ENCODE measurements at regions of chr13 and their contacts with region 1.

Region 1: DNA sequence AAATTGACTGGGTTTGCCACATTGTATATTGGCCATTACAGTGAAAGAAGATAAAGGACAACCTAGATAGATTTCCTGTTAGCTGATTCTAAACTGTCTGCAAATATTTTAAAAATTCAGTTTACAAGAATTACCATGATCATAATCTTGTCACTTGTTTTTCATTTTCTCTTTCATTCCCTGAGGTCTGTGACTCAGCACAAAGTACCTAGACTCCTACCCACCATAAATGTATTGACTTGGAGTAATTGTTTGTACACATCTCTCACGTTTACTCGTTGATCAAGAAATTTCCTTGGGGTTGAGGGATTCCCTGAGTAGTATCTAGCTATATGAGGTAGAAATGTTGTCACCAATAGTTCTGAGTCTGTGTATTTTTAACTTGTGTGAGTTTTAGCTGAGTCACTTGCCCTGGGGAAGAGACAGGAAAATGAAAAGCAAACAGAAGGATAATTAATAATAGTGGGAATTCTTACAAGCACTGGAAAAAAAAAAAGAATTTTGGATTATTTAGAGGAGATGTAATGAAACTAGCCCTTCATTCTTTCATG is 299.2 kb upstream of the DACH1 start:
- DNase-seq: no peak

Region 2: DNA sequence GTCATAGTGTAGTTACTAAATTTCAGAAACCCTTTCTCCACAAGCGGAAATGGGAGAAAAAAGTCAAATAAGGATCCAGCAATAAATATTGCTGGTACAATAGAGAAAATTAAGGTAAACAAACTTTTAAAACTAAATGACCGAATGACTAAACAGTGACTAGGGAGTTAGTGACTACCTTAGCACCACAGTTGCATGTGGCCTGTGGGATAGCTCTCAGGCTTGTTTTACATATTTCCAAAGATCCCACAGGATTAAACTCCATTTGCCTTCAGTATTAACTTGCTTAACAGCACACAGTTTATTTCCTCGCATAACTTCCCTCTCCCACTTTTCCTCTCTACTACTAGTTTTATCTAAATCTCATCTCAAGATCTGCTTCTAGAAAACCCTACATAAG is 1233.7 kb before region 1 on chr13:
- intact Hi-C with region 1: loop called in 1 of 2 experiments (anchors 5 kb)
- DNase-seq: no peak

Region 3: DNA sequence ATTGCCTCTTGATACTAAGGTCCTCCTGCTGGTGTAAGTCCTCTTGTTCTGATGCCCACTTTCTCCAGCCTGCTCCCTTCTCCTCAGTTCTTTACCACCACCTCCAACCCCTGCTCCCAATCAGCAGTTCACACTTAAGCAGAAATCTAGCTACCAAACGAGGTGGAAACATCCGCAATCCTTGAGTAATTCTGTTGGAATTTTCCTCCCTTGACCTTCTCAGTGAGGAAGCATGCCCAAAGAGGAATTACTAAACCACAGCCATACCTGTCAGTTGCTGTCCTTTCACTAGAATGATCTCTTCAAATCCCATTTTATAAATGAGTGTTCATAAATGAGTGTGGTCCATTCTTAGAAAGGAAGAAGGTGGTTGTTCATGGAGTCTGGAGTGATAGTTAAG is 589.0 kb before region 1 on chr13:
- intact Hi-C with region 1: no loop called
- DNase-seq: no peak

Region 4: DNA sequence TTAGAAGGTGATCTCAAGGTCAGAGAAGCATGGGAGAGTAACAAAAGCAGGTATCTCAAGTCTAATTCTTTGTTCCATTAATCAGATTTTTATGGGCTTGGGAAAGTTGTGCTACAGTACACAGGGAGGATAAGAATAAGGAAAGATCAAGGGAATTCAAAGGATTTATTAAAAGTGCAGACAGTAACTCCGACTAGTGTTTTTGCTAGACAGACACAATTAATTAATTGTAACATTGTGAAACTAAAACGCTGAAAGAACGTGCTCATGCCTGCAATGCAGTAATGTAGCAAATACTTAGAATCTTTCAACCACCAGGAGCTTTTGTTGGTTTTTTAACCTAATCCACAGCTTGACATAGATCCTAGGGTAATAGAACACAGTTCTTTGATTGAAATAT is 520.7 kb before region 1 on chr13:
- intact Hi-C with region 1: loop called in 1 of 2 experiments (anchors 5 kb)
- DNase-seq: no peak

Region 5: DNA sequence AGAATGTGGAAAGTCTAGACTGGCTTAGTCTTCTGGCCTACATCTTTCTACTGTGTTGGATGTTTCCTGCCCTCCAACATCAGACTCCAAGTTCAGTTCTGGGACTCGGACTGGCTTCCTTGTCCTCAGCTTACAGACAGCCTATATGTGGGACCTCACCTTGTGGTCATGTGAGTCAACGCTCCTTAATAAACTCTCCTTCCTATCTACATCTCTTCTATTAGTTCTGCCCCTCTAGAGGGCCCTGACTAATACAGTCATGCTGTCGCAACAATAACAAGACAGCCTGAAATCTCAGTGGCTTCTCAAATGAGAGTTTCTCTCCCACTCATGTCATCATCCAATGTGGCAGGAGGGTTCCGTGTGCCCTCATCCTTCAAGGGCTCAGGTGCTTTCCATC is 213.4 kb after region 1 on chr13:
- intact Hi-C with region 1: no loop called
- DNase-seq: no peak

Measured in posterior vena cava (tissue), 2 donors.